CD8-positive, alpha-beta memory T cell (primary cell): ENCODE measurements at regions of chr11 and their contacts with region 1.

Region 1: GRCh38 chr11:128297091-128297651 is 290.2 kb downstream of the ETS1 start:
- DNase-seq: peak in 2 of 5 donors; percentile 45
- H3K4me3 ChIP-seq: no peak overlapping the region
- H3K4me3 Mint-ChIP-seq: peak overlapping the region in 4 of 7 donors; percentile 2 to 59 (median 28)
- H3K27ac ChIP-seq: no peak overlapping the region
- H3K27ac Mint-ChIP-seq: peak overlapping the region; percentile 47 to 99 (median 95)
- H3K4me1 ChIP-seq: peaks cover 98% of the 10 kb centered on the region
- H3K4me1 Mint-ChIP-seq: peaks cover 82 to 100% (median 100%) of the 10 kb centered on the region in 3 donors
- H3K27me3 ChIP-seq: no peaks in the 10 kb centered on the region
- H3K27me3 Mint-ChIP-seq: no peaks in the 10 kb centered on the region

Region 2: DNA sequence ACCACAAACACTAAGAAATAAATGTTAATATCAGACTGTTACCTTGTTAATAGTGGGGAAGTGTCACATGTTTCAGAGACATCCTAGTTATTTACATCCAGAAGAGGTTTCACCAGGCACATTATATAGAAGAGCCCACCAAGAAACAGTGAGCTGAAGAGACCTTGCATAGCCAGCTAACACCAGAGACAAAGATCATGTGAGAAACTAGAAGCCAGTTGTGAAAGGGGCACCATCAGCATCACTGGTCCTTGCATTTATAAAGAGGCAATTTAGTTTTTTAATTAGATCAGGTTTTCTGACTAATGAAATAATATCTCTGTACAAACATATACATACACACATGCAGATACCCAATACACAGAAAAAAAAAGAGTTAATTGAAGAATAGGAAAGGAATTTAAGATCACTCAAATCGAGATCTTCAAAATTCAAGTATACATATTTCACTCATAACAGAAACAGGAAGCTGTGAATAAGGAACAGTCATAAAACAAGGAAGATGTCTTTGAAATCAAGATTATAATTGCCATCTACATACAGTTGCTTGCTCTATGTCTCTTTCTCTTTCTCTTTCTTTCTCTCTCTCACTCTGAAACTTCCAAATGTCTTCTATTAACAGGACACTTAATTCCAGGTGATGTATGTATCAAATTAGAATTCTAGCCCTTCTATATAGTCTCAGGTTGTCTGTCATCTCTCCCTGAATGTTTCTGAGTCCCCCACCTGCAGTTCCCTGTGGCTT is 58.5 kb before region 1 on chr11:
- CTCF ChIA-PET with region 1: no interaction called
- POLR2A ChIA-PET with region 1: no interaction called
- DNase-seq: no peak
- H3K4me3 ChIP-seq: no peak overlapping the region
- H3K4me3 Mint-ChIP-seq: peak overlapping the region in 2 of 7 donors; percentile 1 to 19
- H3K27ac ChIP-seq: no peak overlapping the region
- H3K27ac Mint-ChIP-seq: peak overlapping the region in 5 of 8 donors; percentile 9 to 80 (median 49)
- H3K4me1 ChIP-seq: no peaks in the 10 kb centered on the region
- H3K4me1 Mint-ChIP-seq: peaks cover 14 to 19% (median 17%) of the 10 kb centered on the region in 3 donors
- H3K27me3 ChIP-seq: no peaks in the 10 kb centered on the region
- H3K27me3 Mint-ChIP-seq: no peaks in the 10 kb centered on the region

Region 3: GRCh38 chr11:128496249-128496648 is 199.1 kb after region 1 on chr11:
- CTCF ChIA-PET with region 1: no interaction called
- POLR2A ChIA-PET with region 1: no interaction called
- DNase-seq: no peak
- H3K4me3 ChIP-seq: peak overlapping the region; percentile 32
- H3K4me3 Mint-ChIP-seq: peak overlapping the region; percentile 73 to 91 (median 85)
- H3K27ac ChIP-seq: no peak overlapping the region
- H3K27ac Mint-ChIP-seq: peak overlapping the region; percentile 80 to 99 (median 95)
- H3K4me1 ChIP-seq: peaks cover 100% of the 10 kb centered on the region
- H3K4me1 Mint-ChIP-seq: peaks cover 96 to 100% (median 99%) of the 10 kb centered on the region in 3 donors
- H3K27me3 ChIP-seq: no peaks in the 10 kb centered on the region
- H3K27me3 Mint-ChIP-seq: peaks cover 0 to 2% of the 10 kb centered on the region in 2 donors

Region 4: DNA sequence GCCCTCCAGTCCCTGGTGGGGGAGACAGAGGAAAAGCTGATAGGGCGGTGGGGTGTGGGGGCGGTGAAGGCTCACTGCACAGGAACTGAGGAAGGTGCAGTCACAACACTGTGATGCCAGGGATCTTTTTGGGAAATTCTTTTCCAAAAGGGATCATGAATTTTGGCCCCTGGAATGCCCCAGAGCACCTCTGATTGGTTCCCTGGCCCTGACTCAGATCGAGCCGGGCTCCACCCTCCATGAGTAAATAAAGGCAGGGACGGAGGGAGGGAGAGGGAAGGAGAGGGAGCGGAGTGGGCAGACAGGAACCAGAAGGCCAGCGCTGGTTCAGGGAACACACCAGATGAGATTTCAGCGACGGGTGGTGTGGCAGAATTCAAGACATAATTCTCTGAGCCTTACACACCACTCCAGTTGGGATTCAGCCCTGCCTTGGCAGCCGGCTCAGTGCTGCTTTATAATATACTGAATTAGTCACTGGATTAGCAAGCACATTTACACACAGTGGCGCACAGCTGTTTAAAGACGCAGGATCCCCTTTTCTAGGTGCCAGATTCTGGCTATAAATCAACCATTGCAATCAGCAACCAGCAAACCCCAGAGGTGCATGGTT is 209.9 kb after region 1 on chr11:
- CTCF ChIA-PET with region 1: interaction called, 4 read pairs
- POLR2A ChIA-PET with region 1: interaction called, 20 read pairs
- DNase-seq: no peak
- H3K4me3 ChIP-seq: peak overlapping the region; percentile 97
- H3K4me3 Mint-ChIP-seq: peak overlapping the region; percentile 81 to 99 (median 98)
- H3K27ac ChIP-seq: peak overlapping the region; percentile 48
- H3K27ac Mint-ChIP-seq: peak overlapping the region; percentile 93 to 99 (median 98)
- H3K4me1 ChIP-seq: peaks cover 99% of the 10 kb centered on the region
- H3K4me1 Mint-ChIP-seq: peaks cover 99 to 100% (median 100%) of the 10 kb centered on the region in 3 donors
- H3K27me3 ChIP-seq: no peaks in the 10 kb centered on the region
- H3K27me3 Mint-ChIP-seq: no peaks in the 10 kb centered on the region